ENCODE measurements at regions of chr1 and their contacts with region 1.

Region 1: DNA sequence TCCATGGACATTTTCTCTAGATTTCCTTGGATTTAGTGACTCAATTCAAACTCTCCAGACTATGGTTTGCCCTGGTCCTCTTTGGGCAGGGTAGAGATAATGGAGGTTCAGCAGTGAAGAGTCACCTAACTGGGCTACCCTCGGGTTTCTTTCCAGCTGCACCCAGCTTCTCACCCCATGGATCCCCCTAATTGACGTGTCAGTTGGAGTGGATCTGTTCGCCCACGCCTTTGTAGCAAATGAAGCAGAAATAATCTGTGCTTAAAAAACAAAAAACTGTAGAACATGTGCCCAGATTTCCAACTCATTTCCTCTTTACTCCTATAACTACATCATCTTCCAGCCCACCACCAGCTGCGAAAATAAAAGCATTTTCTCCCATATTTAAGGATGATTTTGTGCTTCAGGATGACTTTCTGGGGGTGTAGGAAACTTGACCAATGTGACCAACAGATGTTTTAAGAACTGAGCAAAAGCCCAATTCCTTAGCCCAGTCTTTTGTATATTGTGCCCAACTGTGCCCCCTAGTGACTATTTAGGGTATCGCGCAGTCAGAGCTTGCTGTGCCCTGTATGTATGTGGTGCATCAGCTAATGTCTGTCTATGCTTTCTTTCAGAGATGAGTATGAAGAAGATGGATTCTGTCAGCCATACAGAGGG is 66.5 kb upstream of the UBE2U start:
- DNase-seq: peak; percentile 75
- H3K4me3 ChIP-seq: no peak overlapping the region
- H3K27ac ChIP-seq: no peak overlapping the region
- H3K4me1 ChIP-seq: no peaks in the 10 kb centered on the region
- H3K27me3 ChIP-seq: no peaks in the 10 kb centered on the region
- CTCF ChIP-seq: peak; percentile 73 to 89 (median 86)
- POLR2A ChIP-seq: no peak

Region 2: GRCh38 chr1:63674238-63674864 is 462.5 kb before region 1 on chr1:
- intact Hi-C with region 1: loop called (anchors 5 kb)
- DNase-seq: peak; percentile 26
- H3K4me3 ChIP-seq: no peak overlapping the region
- H3K27ac ChIP-seq: peak overlapping the region in 1 of 2 donors; percentile 53
- H3K4me1 ChIP-seq: no peaks in the 10 kb centered on the region
- H3K27me3 ChIP-seq: no peaks in the 10 kb centered on the region
- CTCF ChIP-seq: peak; percentile 11 to 59 (median 45)
- POLR2A ChIP-seq: no peak

Region 3: GRCh38 chr1:63917571-63918417 is 219.1 kb before region 1 on chr1:
- intact Hi-C with region 1: loop called (anchors 5 kb)
- DNase-seq: no peak
- H3K4me3 ChIP-seq: no peak overlapping the region
- H3K27ac ChIP-seq: no peak overlapping the region
- H3K4me1 ChIP-seq: peaks cover 3% of the 10 kb centered on the region
- H3K27me3 ChIP-seq: no peaks in the 10 kb centered on the region
- CTCF ChIP-seq: peak in 1 of 4 experiments; percentile 6
- POLR2A ChIP-seq: no peak

Region 4: DNA sequence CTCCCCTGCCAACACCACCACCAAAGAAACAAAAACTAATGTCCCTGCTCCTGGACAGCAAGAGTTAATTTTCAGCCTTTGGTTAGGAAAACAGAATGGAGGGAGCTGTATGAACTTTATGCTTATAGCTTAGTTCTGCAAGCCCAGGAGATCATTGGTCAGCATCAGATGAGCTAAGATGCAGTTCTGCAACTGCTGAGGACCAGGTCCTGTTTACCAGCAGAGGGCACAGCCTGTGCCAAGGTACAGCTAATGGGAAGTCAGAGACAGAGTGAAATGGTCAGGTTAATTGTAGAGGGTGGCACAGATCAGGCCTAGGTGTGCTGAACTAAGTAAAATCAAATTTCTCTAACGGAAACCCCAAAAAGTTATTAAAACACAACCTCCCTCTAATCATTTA is 201.7 kb before region 1 on chr1:
- intact Hi-C with region 1: loop called (anchors 5 kb)
- DNase-seq: peak; percentile 11
- H3K4me3 ChIP-seq: no peak overlapping the region
- H3K27ac ChIP-seq: no peak overlapping the region
- H3K4me1 ChIP-seq: no peaks in the 10 kb centered on the region
- H3K27me3 ChIP-seq: no peaks in the 10 kb centered on the region
- CTCF ChIP-seq: peak in 3 of 4 experiments; percentile 16 to 38 (median 30)
- POLR2A ChIP-seq: no peak

Region 5: DNA sequence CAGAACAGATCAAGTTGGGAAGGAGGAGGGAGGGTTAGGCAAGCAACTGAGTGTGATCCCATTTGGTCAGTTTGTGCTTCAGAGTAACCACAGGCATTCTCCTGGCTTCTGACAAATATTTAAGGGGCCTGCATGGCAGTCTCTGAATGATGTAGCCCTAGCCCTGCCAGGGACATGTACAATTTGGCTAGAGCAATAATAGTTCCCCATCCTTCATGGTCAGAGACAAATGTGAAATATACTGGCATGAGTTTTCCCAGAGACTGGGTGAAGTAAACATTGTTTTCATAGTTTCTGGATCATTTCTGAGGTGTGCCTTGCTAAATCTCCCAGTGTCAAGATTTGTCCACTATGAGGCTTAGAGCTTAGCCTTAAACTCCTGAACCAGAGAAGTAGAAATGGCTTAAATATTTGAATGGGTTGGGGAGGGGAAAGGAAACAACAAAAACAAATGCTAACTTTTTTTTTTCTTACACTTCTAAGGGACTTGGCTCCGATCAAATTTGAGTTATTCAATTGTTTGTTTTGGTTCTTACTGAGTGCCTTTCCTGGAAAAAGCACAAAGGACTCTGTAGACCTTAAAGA is 24.6 kb after region 1 on chr1:
- intact Hi-C with region 1: no loop called
- DNase-seq: no peak
- H3K4me3 ChIP-seq: no peak overlapping the region
- H3K27ac ChIP-seq: peak overlapping the region in 1 of 2 donors; percentile 10
- H3K4me1 ChIP-seq: no peaks in the 10 kb centered on the region
- H3K27me3 ChIP-seq: no peaks in the 10 kb centered on the region
- CTCF ChIP-seq: no peak
- POLR2A ChIP-seq: no peak

Measured in prostate gland (tissue), 2 donors.